ENCODE measurements at regions of chr17 and their contacts with region 1.

Region 1: DNA sequence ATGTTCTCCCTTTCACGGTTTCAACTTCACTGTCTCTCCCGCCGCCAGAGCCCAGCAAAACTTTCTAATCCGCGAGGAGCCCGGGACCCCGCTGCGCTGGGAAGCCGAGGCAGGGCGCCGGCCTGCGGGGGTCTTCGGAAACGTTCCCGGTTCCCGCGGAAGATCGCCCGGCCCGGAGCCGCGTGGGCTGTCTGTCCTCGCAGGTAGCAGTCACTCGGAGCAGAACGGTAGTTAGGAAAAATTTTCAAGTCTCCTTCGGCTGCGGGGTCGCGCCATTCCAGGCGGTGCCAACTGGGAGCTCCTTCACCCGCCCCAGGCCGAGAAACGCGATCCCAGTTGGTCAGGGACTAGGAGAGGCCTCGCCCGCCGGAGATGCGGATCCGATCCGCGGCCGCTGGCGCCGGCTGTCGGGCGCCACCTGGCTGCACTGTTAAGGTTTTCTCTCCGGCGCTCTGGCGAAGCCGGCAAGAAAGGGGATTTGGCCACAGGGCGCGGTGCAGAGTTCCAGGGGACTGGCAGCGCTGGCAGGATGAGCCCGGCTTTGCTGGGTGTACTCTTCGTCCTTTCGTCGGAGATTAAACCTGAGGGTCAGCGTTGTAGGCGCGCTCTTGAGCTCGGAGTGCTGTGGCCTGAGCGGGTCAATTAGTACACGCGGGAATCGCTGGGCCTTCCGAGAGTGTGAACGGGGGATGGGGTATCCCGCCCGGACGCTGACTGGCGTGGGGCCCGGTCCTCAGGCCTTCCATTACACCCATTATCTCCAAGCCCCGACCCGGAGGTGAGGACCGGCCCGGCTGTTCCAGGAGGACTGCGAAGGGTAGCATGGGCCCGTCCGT is 135.4 kb downstream of the KCNJ12 start:
- DNase-seq: no peak
- H3K4me3 ChIP-seq: peak overlapping the region; percentile 58
- CTCF ChIP-seq: peak; percentile 76

Region 2: DNA sequence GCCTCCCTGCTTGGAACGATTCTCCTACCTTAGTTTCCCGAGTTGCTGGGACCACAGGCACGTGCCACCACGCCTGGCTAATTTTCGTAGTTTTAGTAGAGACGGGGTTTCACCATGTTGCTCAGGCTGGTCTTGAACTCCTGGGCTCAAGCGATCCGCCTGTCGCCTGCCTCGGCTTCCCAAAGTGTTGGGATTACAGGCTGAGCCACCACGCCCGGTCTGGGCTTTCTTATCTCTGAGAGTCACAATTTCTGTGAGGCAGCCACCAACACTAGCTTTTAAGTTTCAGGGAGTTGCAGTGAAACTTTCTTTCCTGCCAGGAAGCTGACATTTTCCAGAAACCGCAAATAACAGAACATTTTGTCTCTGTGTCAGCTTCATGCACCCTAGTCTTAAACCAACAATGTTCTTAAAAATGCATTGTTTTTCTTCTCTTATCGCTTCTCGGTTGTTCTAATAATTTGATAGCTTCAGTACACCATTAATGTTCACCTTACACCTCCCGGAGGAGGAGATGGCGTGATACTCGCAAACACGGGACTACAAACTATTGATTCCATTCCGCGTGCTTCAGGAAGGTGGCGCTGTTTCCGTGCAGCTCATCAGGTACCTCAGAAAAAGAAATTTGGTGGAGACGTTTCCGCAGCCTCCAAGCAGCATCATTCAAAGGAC is 392.2 kb before region 1 on chr17:
- CTCF ChIA-PET with region 1: interaction called, 78 read pairs
- POLR2A ChIA-PET with region 1: no interaction called
- DNase-seq: no peak
- H3K4me3 ChIP-seq: no peak overlapping the region
- CTCF ChIP-seq: peak; percentile 90

Region 3: GRCh38 chr17:21134559-21134958 is 377.0 kb before region 1 on chr17:
- CTCF ChIA-PET with region 1: interaction called, 81 read pairs
- POLR2A ChIA-PET with region 1: no interaction called
- DNase-seq: no peak
- H3K4me3 ChIP-seq: no peak overlapping the region
- CTCF ChIP-seq: no peak

Region 4: DNA sequence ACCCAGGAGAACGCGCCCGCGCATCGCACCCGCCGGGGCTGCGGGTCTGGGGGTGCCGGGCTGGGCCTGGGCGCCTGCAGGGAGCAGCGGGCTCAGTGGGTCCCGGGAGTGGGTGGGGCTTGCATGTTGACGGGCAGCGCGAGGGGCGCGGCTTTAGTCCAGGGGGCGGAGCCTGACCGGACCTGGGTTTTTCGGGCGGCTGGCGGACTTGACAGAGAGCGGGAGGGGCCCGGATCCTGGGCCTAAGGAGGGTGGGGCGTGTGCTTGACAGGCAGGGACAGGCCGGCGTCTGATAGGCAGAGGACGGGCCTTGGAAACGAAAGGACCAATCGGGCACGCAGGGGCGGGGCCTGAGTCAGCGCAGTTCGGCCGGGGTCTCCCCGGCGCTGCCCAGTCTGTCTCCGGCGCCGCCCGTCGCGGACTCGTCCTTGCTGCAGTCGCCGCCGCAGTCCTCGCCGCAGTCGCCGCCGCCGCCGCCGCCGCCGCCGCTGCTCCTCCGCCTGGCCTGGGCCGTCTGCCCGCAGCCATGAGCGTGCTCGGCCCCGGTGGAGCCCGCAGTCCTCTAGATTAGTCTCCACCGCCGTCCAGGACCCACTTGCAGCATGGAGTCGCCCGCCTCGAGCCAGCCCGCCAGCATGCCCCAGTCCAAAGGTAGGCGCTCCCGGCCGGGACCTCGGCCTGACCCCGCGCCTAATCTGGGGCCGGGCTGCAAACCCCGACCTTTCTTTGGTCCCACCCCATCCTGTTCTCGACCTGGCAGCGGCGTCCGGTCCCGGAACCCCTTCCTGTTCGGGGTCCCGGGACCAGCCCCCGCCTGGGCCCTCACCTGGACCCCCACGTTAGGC is 227.0 kb before region 1 on chr17 and contains the start of gene MAP2K3:
- CTCF ChIA-PET with region 1: interaction called, 56 read pairs
- POLR2A ChIA-PET with region 1: interaction called, 4 read pairs
- DNase-seq: peak; percentile 96
- H3K4me3 ChIP-seq: peak within 1 kb of the TSS; percentile 91
- CTCF ChIP-seq: no peak

Region 5: GRCh38 chr17:21457051-21458026 is 54.2 kb before region 1 on chr17:
- CTCF ChIA-PET with region 1: interaction called, 241 read pairs
- POLR2A ChIA-PET with region 1: interaction called, 5 read pairs
- DNase-seq: peak; percentile 17
- H3K4me3 ChIP-seq: no peak overlapping the region
- CTCF ChIP-seq: peak; percentile 98

Region 6: GRCh38 chr17:21524211-21524591 is 12.6 kb after region 1 on chr17:
- CTCF ChIA-PET with region 1: interaction called, 72 read pairs
- POLR2A ChIA-PET with region 1: no interaction called
- DNase-seq: peak; percentile 5
- H3K4me3 ChIP-seq: no peak overlapping the region
- CTCF ChIP-seq: no peak

Region 7: GRCh38 chr17:21549107-21549687 is 37.6 kb after region 1 on chr17:
- CTCF ChIA-PET with region 1: interaction called, 25 read pairs
- POLR2A ChIA-PET with region 1: no interaction called
- DNase-seq: no peak
- H3K4me3 ChIP-seq: peak overlapping the region; percentile 72
- CTCF ChIP-seq: no peak

Region 8: GRCh38 chr17:22286337-22287041 is 774.9 kb after region 1 on chr17:
- CTCF ChIA-PET with region 1: no interaction called
- POLR2A ChIA-PET with region 1: no interaction called
- DNase-seq: no peak
- H3K4me3 ChIP-seq: no peak overlapping the region
- CTCF ChIP-seq: no peak